Activated naive CD4-positive, alpha-beta T cell treated with anti-CD3 and anti-CD28 coated beads for 36 hours (primary cell): ENCODE measurements at regions of chr6 and their contacts with region 1.

Region 1: DNA sequence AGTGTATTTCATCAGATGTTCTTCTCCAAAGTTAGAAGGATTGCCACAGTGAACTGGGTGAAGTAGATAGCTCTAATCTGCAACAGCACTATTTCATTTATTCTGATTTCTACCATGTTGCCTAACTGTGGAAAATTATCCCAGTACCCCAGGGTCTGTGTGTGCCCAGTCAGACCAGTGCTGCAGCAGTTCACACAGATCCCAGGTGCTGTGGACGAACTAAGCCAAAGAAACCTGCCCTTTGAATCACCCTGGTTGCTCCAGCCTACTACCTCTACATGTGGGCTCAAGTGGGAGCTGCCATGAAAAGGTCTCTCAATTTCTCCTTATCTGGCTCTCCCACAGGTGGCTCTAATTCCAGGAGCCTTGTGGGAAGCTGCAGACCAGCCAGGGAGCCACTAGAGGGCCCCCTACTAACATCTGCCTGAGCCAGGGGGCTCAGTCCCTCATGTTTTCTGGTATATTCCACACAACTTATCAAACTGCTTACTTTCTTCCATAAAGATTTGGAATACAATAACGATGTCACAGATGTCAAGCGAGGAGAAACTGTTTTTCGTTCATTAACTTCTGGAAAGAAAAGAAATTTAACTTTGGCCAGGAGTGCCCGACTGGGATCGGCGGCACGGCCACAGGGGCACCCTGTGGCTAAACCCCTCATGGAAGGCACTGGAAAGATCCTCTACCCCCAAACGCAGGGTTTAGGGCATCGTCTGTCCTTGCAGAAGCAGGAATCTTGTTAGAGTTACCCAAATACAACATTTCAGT is 31.6 kb upstream of the LY86 start:
- DNase-seq: peak; percentile 68
- H3K4me3 Mint-ChIP-seq: no peak overlapping the region
- H3K27ac Mint-ChIP-seq: no peak overlapping the region
- H3K4me1 Mint-ChIP-seq: peaks cover 44% of the 10 kb centered on the region
- H3K27me3 Mint-ChIP-seq: no peaks in the 10 kb centered on the region

Region 2: DNA sequence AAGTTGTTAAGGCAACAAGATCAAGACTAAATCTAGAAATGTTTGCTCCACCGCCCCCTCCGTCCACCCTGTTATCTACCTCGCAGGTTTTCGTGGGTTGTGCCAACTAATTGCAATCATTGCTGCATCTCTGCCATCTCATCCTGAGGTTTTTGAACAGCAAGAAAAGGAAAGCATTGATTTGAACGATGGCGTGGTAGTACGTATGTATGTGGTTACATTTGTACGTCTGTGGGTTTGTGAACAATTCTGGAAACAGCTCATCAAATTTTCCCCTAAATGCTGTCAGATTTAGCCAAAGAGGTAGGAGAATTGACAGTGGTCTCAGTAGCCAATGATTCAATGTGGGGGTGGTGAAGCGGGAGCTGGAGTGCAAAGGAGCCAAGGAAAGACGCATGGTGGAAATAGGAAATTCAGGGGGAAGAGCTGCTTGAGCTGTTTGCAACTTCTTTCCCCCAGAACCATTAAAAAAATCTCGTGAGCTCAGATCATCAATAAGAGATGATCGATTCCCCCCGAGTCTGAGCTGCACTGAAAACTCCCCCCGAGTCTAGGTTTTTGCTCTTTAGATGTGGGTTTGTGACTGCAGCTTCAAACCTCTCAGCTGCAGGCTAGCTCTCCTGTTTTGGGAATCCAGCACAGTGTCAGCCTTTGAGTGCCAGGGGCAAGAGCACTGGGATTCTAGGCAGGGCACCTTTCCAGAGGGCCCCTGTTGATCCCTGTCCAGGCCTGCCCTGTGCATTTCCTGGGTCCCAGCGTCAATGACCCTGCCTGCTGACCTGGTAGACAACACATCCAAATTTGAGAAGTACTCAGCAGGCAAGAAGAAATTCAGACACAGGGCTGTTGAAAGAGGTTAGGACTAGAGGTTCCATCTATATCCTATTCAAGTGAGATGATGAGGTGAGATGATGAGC is 41.0 kb before region 1 on chr6:
- CTCF ChIA-PET with region 1: no interaction called
- intact Hi-C with region 1: loop called (anchors 2 kb)
- DNase-seq: peak; percentile 86
- H3K4me3 Mint-ChIP-seq: no peak overlapping the region
- H3K27ac Mint-ChIP-seq: peak overlapping the region; percentile 46
- H3K4me1 Mint-ChIP-seq: peaks cover 23% of the 10 kb centered on the region
- H3K27me3 Mint-ChIP-seq: peaks cover 68% of the 10 kb centered on the region

Region 3: GRCh38 chr6:6588064-6588923 is 31.4 kb after region 1 on chr6 and contains the start of gene LY86:
- CTCF ChIA-PET with region 1: interaction called, 3 read pairs
- intact Hi-C with region 1: loop called (anchors 1 kb)
- DNase-seq: peak; percentile 46
- H3K4me3 Mint-ChIP-seq: peak within 1 kb of the TSS; percentile 75
- H3K27ac Mint-ChIP-seq: peak within 1 kb of the TSS; percentile 87
- H3K4me1 Mint-ChIP-seq: peaks cover 75% of the 10 kb centered on the region
- H3K27me3 Mint-ChIP-seq: no peaks in the 10 kb centered on the region
- total RNA-seq, gene LY86: 1.8 to 2.0 TPM

Region 4: DNA sequence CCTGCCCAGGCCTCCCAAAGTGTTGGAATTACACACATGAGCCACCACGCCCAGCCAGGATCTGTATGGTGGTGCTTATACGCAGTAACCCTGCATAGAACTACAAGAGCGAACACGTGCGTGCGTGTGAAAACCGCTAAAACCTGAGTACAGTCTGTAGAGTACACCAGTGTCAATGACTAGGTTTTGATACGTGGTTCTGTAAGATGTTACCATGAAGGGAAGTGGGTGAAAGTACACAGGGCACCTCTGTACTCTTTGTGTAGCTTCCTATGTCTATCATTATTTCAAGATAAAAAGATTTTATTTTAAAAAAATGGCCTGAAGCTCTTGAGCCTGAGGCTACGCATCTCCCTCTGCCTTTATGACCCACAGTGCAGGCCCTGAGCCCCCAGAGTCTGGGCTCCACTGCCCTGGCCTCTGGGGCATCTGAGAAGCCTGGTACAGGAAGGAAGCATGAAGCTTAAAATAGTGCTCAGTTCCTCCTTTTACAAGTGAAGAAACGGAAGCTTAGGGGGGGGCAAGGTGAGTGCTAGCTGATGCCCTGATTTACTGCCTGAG is 53.2 kb after region 1 on chr6:
- CTCF ChIA-PET with region 1: interaction called, 3 read pairs
- intact Hi-C with region 1: loop called (anchors 1 kb)
- DNase-seq: peak; percentile 73
- H3K4me3 Mint-ChIP-seq: peak overlapping the region; percentile 5
- H3K27ac Mint-ChIP-seq: peak overlapping the region; percentile 83
- H3K4me1 Mint-ChIP-seq: peaks cover 57% of the 10 kb centered on the region
- H3K27me3 Mint-ChIP-seq: no peaks in the 10 kb centered on the region

Region 5: GRCh38 chr6:7238900-7239589 is 682.1 kb after region 1 on chr6:
- CTCF ChIA-PET with region 1: no interaction called
- intact Hi-C with region 1: loop called (anchors 1 kb)
- DNase-seq: peak; percentile 93
- H3K4me3 Mint-ChIP-seq: no peak overlapping the region
- H3K27ac Mint-ChIP-seq: peak overlapping the region; percentile 15
- H3K4me1 Mint-ChIP-seq: peaks cover 27% of the 10 kb centered on the region
- H3K27me3 Mint-ChIP-seq: no peaks in the 10 kb centered on the region